Lower leg skin (tissue), 4 donors: ENCODE measurements at regions of chr12 and their contacts with region 1.

Region 1: DNA sequence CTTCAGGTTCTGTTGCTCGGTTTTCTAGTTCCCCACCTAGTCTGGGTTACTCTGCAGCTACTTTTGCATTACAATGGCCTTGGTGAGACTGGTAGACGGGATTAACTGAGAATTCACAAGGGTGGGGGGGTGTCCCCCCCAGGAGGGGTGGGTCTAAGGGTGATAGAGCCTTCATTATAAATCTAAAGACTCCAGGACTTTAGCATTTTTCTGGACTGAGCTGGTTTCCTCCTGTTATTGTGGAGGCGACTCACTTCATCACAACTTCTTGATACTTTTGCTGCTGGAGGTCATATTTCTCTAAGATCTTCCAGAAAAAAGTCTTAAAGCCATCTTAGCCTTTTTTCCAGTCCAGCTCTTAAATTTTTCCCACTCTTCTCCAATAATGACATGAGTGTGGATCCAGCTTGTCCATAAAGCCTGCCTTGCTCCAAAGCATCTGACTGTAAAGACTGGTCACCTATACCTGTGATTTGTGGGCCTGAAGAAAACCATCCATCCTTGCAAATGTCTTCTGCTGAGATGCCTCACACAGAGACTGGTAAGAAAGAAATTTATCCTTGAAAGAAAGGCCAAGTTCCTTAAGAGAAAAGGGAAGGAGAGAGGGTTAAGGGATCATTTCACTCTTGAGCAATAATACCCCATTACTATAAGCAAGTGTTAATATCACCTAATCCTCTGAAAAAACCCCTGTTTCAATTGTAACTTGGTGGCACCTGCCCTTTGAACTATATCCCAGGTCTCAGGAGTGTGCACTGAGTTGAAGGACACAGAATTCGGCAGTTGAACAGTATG is 19.7 kb upstream of the SLC2A14 start:
- DNase-seq: peak in 1 of 2 donors; percentile 34
- H3K4me3 ChIP-seq: no peak overlapping the region
- CTCF ChIP-seq: no peak
- POLR2A ChIP-seq: no peak

Region 2: DNA sequence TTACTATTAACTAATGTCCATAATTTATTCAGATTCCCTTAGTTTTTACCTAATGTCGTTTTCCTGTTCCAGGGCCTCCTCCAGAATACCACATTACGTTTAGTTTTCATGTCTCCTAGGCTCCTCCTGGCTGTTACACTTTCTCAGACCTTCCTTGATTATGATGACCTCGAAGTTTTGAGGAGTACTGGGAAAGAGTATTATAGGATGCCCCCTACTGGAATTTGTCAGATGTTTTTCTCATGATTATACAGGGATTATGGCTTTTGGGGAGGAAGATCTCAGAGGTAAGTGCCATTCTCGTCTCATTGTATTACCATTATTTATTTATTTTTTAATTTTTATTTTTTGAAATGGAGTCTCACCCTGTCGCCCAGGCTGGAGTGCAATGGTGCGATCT is 849.5 kb before region 1 on chr12:
- intact Hi-C with region 1: loop called (anchors 5 kb)
- DNase-seq: no peak
- H3K4me3 ChIP-seq: no peak overlapping the region
- CTCF ChIP-seq: no peak
- POLR2A ChIP-seq: no peak

Region 3: GRCh38 chr12:7948589-7949260 is 56.3 kb after region 1 on chr12:
- intact Hi-C with region 1: no loop called
- DNase-seq: no peak
- H3K4me3 ChIP-seq: no peak overlapping the region
- CTCF ChIP-seq: no peak
- POLR2A ChIP-seq: no peak